ENCODE measurements at regions of chr11 and their contacts with region 1.

Region 1: GRCh38 chr11:64358907-64359711 is at the start of gene RPS6KA4:
- DNase-seq: peak; percentile 58
- H3K4me3 Mint-ChIP-seq: peak within 1 kb of the TSS; percentile 82
- H3K27ac Mint-ChIP-seq: peak within 1 kb of the TSS; percentile 8
- H3K4me1 Mint-ChIP-seq: peaks cover 35% of the 10 kb centered on the region
- H3K27me3 Mint-ChIP-seq: no peaks in the 10 kb centered on the region
- CTCF ChIP-seq: no peak
- total RNA-seq, gene RPS6KA4: 42.5 and 46.5 TPM in 2 replicates

Region 2: DNA sequence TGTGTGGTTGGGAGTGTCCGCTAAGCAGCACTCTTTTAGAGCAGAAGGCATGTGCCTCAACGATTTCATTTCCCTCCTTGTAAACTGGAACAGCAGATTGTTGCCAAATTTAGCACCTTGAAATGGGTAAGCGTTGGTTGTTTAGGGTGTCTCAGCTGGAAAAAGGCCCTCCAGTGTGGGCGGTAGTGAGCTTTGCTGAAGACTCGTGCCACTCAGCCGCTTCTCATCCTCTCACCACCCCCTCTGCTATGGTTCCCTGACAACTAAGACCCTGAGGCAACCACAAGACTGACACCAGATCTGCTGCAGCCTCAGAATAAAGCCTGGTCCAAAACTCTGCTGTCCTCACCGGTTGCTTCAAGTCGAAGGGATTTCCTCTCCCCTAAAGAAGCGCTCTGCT is 162.5 kb before region 1 on chr11:
- CTCF ChIA-PET with region 1: no interaction called
- POLR2A ChIA-PET with region 1: no interaction called
- intact Hi-C with region 1: no loop called
- DNase-seq: no peak
- H3K4me3 Mint-ChIP-seq: no peak overlapping the region
- H3K27ac Mint-ChIP-seq: no peak overlapping the region
- H3K4me1 Mint-ChIP-seq: no peaks in the 10 kb centered on the region
- H3K27me3 Mint-ChIP-seq: no peaks in the 10 kb centered on the region
- CTCF ChIP-seq: no peak

Region 3: DNA sequence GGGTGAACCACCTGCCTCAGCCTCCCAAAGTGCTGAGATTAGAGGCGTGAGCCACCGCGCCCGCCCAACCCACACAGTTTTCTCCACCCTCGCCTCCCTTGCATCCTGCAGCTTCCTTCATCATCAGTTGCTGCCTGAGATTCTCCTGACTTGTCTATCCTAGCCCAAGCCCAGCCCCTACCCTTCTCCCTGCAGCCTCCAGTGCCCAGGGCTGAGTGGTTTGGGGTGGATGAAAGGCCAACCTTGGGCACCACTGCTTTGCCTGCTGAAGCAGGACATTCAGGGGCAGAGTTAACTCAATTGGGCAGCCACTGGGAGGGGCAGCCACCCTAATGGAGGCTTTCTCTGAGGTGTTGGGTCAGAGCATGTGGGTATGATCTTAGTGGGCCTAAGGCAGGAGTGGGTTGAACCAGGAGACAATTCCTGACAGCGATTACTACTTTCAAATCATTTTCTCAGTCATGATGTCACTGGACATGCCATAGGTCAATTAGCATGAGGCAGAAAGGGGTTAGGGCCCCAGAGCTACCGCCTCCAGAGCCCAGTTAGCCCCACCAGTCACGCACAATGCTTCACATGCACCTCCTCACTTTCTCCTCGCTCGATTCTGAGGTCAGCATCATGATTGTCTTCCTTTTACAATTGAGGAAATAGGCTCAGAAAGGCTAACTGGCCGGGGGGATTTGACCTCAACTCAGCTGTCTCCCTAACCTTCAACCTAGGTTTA is 119.3 kb before region 1 on chr11:
- CTCF ChIA-PET with region 1: no interaction called
- POLR2A ChIA-PET with region 1: no interaction called
- intact Hi-C with region 1: no loop called
- DNase-seq: no peak
- H3K4me3 Mint-ChIP-seq: peak overlapping the region; percentile 93
- H3K27ac Mint-ChIP-seq: peak overlapping the region; percentile 98
- H3K4me1 Mint-ChIP-seq: peaks cover 23% of the 10 kb centered on the region
- H3K27me3 Mint-ChIP-seq: no peaks in the 10 kb centered on the region
- CTCF ChIP-seq: no peak

Region 4: GRCh38 chr11:64276653-64277431 is 82.3 kb before region 1 on chr11:
- CTCF ChIA-PET with region 1: interaction called, 23 read pairs
- POLR2A ChIA-PET with region 1: interaction called, 3 read pairs
- intact Hi-C with region 1: no loop called
- DNase-seq: peak; percentile 90
- H3K4me3 Mint-ChIP-seq: peak overlapping the region; percentile 14
- H3K27ac Mint-ChIP-seq: peak overlapping the region; percentile 79
- H3K4me1 Mint-ChIP-seq: peaks cover 4% of the 10 kb centered on the region
- H3K27me3 Mint-ChIP-seq: no peaks in the 10 kb centered on the region
- CTCF ChIP-seq: no peak

Region 5: DNA sequence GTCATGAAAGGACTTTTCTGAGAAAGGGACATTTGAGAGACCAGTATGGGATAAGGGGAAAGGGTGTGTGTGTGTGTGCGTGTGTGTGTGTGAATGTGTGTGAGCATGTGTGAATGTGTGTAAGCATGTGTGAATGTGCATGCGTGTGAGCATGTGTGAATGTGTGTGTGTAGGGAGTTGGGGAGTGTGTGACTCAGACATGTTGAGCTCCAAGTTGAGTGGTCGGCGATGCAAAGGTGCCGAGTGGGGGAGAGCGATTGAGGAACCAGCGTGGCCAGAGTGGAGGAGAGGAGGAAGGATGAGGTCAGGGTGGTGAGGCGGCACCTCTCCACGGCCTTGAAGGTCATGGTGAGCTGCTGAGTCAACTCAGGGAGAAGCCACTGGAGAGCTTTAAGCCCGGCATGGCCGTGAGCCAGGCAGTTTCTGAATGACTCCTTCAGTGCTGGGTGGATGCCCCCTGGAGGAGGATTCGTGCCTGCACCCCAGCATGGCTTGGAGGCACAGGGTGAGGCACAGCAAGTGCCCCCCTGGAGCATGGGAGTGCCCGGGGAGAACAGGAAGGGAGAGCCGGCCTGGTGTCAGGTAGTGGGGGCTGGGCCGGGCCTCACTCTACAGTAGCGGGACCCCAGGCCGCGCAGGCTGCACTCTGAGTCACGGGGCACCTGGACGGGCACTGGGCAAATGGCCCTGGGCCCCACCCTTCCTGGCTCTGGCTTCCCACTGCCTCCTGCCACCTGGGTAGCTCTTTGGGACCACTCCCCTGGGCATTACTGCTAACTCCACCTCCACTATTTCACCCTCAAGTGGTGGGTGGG is 27.3 kb before region 1 on chr11:
- CTCF ChIA-PET with region 1: interaction called, 135 read pairs
- POLR2A ChIA-PET with region 1: interaction called, 14 read pairs
- intact Hi-C with region 1: no loop called
- DNase-seq: peak; percentile 98
- H3K4me3 Mint-ChIP-seq: peak overlapping the region; percentile 8
- H3K27ac Mint-ChIP-seq: peak overlapping the region; percentile 61
- H3K4me1 Mint-ChIP-seq: peaks cover 20% of the 10 kb centered on the region
- H3K27me3 Mint-ChIP-seq: no peaks in the 10 kb centered on the region
- CTCF ChIP-seq: peak; percentile 79

Region 6: GRCh38 chr11:64341851-64342791 is 17.0 kb before region 1 on chr11:
- CTCF ChIA-PET with region 1: interaction called, 135 read pairs
- POLR2A ChIA-PET with region 1: interaction called, 11 read pairs
- intact Hi-C with region 1: no loop called
- DNase-seq: peak; percentile 90
- H3K4me3 Mint-ChIP-seq: peak overlapping the region; percentile 65
- H3K27ac Mint-ChIP-seq: peak overlapping the region; percentile 35
- H3K4me1 Mint-ChIP-seq: peaks cover 12% of the 10 kb centered on the region
- H3K27me3 Mint-ChIP-seq: no peaks in the 10 kb centered on the region
- CTCF ChIP-seq: peak; percentile 36

Region 7: GRCh38 chr11:64348611-64349484 is 10.3 kb before region 1 on chr11:
- CTCF ChIA-PET with region 1: interaction called, 58 read pairs
- POLR2A ChIA-PET with region 1: interaction called, 10 read pairs
- intact Hi-C with region 1: no loop called
- DNase-seq: no peak
- H3K4me3 Mint-ChIP-seq: no peak overlapping the region
- H3K27ac Mint-ChIP-seq: no peak overlapping the region
- H3K4me1 Mint-ChIP-seq: peaks cover 13% of the 10 kb centered on the region
- H3K27me3 Mint-ChIP-seq: no peaks in the 10 kb centered on the region
- CTCF ChIP-seq: no peak

Region 8: DNA sequence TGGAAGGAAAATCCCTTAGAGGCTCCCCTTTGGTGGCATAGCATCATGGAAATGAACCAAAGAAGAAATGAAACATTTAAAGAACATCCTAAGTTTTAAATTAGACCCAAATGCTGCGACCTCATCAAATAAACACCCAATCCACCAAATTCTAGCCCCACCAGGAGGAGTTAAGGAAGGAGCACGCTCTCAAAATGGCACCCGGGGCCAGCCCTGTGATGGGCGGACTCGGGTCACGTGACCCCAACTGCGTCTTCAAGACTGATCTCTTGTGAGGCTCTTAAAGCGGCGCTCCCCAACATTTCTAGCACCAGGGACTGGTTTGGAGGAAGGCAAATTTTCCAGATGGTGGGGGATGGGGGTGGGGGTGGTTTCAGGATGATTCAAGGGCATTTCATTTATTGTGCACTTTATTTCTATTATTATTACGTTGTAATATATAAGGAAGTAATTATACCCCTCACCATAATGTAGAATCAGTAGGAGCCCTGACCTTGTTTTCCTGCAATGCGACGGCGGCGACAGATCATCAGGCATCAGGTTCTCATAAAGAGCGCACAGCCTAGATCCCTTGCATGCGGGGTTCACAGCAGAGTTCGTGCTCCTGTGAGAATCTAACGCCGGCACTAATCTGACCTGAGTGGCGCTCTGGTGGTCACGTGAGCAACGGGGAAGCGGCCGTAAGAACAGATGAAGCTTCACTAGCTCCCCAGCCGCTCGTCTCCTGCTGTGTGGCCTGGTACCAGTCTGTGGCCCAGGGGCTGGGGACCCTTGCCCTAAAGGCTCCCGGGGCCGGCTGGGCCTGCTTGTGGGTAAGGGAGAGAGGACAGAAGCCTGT is 141.3 kb after region 1 on chr11:
- CTCF ChIA-PET with region 1: no interaction called
- POLR2A ChIA-PET with region 1: no interaction called
- intact Hi-C with region 1: no loop called
- DNase-seq: peak; percentile 29
- H3K4me3 Mint-ChIP-seq: no peak overlapping the region
- H3K27ac Mint-ChIP-seq: no peak overlapping the region
- H3K4me1 Mint-ChIP-seq: peaks cover 5% of the 10 kb centered on the region
- H3K27me3 Mint-ChIP-seq: peaks cover 13% of the 10 kb centered on the region
- CTCF ChIP-seq: no peak

Region 9: DNA sequence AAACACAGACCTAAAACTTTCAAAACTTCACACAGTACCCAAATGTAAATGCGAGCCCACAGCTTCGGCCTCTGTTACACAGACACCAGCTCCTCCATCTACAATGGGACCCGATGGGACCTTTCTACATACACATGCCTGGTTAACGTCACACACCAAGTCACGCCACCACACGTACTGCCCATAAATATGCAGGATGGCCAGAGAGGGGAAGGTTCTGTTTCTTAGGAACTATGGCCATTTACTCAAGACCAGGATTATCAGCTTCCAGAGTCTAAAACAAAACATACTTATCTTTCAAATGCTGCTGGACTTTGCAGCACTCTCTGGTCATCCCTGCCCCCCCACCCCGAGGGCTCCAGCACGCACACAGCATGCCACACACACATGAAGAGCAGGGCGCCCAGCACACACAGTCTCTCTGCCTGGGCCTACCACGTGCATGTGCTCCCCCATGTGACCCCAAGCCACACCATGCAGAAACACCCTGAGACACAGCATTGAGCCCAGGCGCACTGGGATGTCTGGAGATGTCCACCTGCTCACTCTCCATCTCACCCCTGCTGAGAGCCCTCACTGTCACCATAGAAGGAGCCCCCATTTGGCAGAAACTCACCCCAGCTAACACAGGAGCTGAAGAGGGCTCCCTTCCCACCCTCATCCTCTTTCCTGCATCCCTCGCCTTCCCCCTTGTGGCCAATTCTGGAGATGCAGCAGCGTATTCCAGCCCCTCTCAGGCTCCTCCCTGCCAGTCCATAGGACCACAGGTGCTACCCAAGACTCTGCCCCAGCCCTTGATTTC is 293.7 kb after region 1 on chr11:
- CTCF ChIA-PET with region 1: interaction called, 17 read pairs
- POLR2A ChIA-PET with region 1: interaction called, 3 read pairs
- intact Hi-C with region 1: loop called (anchors 5 kb)
- DNase-seq: peak; percentile 74
- H3K4me3 Mint-ChIP-seq: no peak overlapping the region
- H3K27ac Mint-ChIP-seq: no peak overlapping the region
- H3K4me1 Mint-ChIP-seq: no peaks in the 10 kb centered on the region
- H3K27me3 Mint-ChIP-seq: no peaks in the 10 kb centered on the region
- CTCF ChIP-seq: peak; percentile 97